Activated B cell treated with CpG ODN at 0.5 μM for 24 hours (primary cell): ENCODE measurements at regions of chr21 and their contacts with region 1.

Region 1: GRCh38 chr21:32653311-32653901 is 41.2 kb upstream of the CFAP298 start:
- DNase-seq: no peak
- ATAC-seq: peak; percentile 52
- H3K4me3 Mint-ChIP-seq: no peak overlapping the region
- H3K27ac Mint-ChIP-seq: no peak overlapping the region
- H3K4me1 Mint-ChIP-seq: no peaks in the 10 kb centered on the region
- H3K27me3 Mint-ChIP-seq: no peaks in the 10 kb centered on the region
- CTCF ChIP-seq: no peak

Region 2: DNA sequence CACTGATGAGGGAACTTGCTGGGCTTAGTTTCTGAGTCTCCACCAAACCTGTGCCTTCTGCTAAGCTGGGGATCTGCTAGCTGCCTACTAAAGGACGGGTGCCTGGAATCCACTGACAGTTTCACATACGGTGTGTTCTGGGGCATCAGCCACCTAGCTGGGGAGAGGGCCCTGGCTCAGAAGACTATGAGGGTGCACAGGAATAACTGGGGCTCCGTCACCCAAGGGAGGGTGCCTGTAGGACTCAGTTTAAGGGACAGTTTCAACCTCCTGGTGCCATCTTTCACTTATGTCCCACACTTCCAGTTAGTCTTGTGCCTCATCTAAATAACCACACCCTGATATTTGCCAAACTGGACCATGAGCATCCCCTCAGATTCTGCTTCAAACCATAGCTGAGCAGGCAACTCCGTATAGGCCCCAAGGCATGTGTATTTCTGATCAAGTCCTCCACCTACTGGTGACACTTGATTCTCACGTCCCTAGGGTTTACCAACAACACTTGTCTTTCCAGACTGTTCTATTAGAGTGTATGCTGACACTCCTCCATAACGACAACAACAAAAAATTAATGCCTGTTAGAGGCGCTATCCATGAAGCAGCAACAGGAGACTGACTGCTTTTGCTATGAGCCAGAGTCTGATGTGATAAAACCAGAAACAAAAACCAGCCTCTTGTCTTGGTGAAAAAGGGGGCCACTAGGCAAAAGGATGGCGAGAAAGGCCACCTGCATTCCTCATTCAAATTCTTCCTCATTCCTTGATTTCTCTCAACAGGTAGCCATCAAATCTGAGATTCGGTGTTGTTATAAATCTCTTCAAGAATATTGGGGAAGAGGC is 173.1 kb after region 1 on chr21:
- CTCF ChIA-PET with region 1: interaction called, 4 read pairs
- POLR2A ChIA-PET with region 1: no interaction called
- intact Hi-C with region 1: loop called (anchors 1 kb)
- DNase-seq: no peak
- ATAC-seq: peak; percentile 75
- H3K4me3 Mint-ChIP-seq: no peak overlapping the region
- H3K27ac Mint-ChIP-seq: no peak overlapping the region
- H3K4me1 Mint-ChIP-seq: no peaks in the 10 kb centered on the region
- H3K27me3 Mint-ChIP-seq: peaks cover 10% of the 10 kb centered on the region
- CTCF ChIP-seq: no peak

Region 3: GRCh38 chr21:32916522-32917099 is 263.2 kb after region 1 on chr21:
- CTCF ChIA-PET with region 1: no interaction called
- POLR2A ChIA-PET with region 1: no interaction called
- intact Hi-C with region 1: loop called (anchors 5 kb)
- DNase-seq: no peak
- ATAC-seq: no peak
- H3K4me3 Mint-ChIP-seq: no peak overlapping the region
- H3K27ac Mint-ChIP-seq: no peak overlapping the region
- H3K4me1 Mint-ChIP-seq: no peaks in the 10 kb centered on the region
- H3K27me3 Mint-ChIP-seq: peaks cover 32% of the 10 kb centered on the region
- CTCF ChIP-seq: no peak

Region 4: GRCh38 chr21:32929633-32930038 is 276.2 kb after region 1 on chr21:
- CTCF ChIA-PET with region 1: no interaction called
- POLR2A ChIA-PET with region 1: no interaction called
- intact Hi-C with region 1: no loop called
- DNase-seq: no peak
- ATAC-seq: no peak
- H3K4me3 Mint-ChIP-seq: no peak overlapping the region
- H3K27ac Mint-ChIP-seq: no peak overlapping the region
- H3K4me1 Mint-ChIP-seq: peaks cover 22% of the 10 kb centered on the region
- H3K27me3 Mint-ChIP-seq: peaks cover 3% of the 10 kb centered on the region
- CTCF ChIP-seq: no peak

Region 5: GRCh38 chr21:33894736-33895288 is 1241.4 kb after region 1 on chr21:
- CTCF ChIA-PET with region 1: no interaction called
- POLR2A ChIA-PET with region 1: no interaction called
- intact Hi-C with region 1: loop called (anchors 10 kb)
- DNase-seq: no peak
- ATAC-seq: peak; percentile 82
- H3K4me3 Mint-ChIP-seq: peak overlapping the region; percentile 47
- H3K27ac Mint-ChIP-seq: no peak overlapping the region
- H3K4me1 Mint-ChIP-seq: peaks cover 7% of the 10 kb centered on the region
- H3K27me3 Mint-ChIP-seq: peaks cover 7% of the 10 kb centered on the region
- CTCF ChIP-seq: no peak